ENCODE measurements at regions of chr11 and their contacts with region 1.

Region 1: GRCh38 chr11:19679952-19680828 is 32.4 kb upstream of the NAV2 start:
- DNase-seq: peak; percentile 72 to 76
- ATAC-seq: peak; percentile 64 to 75
- H3K4me3 ChIP-seq: no peak overlapping the region
- H3K27ac ChIP-seq: peak overlapping the region; percentile 56 to 76 (median 73)
- H3K4me1 ChIP-seq: peaks cover 23 to 50% of the 10 kb centered on the region in 2 donors
- H3K27me3 ChIP-seq: no peaks in the 10 kb centered on the region
- CTCF ChIP-seq: no peak
- POLR2A ChIP-seq: no peak

Region 2: GRCh38 chr11:18972336-18972735 is 707.9 kb before region 1 on chr11:
- in situ Hi-C with region 1: no loop called
- intact Hi-C with region 1: no loop called
- DNase-seq: no peak
- ATAC-seq: no peak
- H3K4me3 ChIP-seq: no peak overlapping the region
- H3K27ac ChIP-seq: no peak overlapping the region
- H3K4me1 ChIP-seq: no peaks in the 10 kb centered on the region
- H3K27me3 ChIP-seq: no peaks in the 10 kb centered on the region
- CTCF ChIP-seq: no peak
- POLR2A ChIP-seq: no peak

Region 3: GRCh38 chr11:19526119-19526518 is 154.1 kb before region 1 on chr11:
- in situ Hi-C with region 1: no loop called
- intact Hi-C with region 1: no loop called
- DNase-seq: no peak
- ATAC-seq: no peak
- H3K4me3 ChIP-seq: no peak overlapping the region
- H3K27ac ChIP-seq: no peak overlapping the region
- H3K4me1 ChIP-seq: no peaks in the 10 kb centered on the region
- H3K27me3 ChIP-seq: no peaks in the 10 kb centered on the region
- CTCF ChIP-seq: no peak
- POLR2A ChIP-seq: no peak

Region 4: DNA sequence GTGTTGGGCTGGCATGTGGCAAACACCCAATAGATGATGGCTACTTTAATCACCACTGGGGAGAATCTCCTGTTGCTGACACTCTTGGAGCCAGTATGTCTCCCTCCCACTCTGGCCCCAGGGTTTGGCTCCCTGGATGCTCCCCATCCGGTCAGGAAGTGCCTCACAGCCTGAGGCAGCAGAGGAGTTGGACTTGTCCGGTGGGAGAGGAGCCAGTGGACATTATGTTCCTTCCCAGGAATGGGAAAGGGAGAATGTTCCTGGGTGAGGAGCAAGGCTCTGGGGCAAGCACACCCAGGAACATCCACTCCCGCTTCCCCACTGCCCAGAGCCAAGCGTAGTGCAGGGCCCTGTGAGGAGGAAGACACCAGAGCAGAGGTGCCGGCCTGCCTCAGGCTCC is 52.2 kb before region 1 on chr11:
- in situ Hi-C with region 1: no loop called
- intact Hi-C with region 1: loop called (anchors 2 kb)
- DNase-seq: peak; percentile 84 to 86
- ATAC-seq: peak; percentile 95 to 97
- H3K4me3 ChIP-seq: no peak overlapping the region
- H3K27ac ChIP-seq: peak overlapping the region; percentile 62 to 76 (median 70)
- H3K4me1 ChIP-seq: peaks cover 9 to 22% of the 10 kb centered on the region in 2 donors
- H3K27me3 ChIP-seq: no peaks in the 10 kb centered on the region
- CTCF ChIP-seq: no peak
- POLR2A ChIP-seq: peak in 1 of 2 donors; percentile 18

Region 5: DNA sequence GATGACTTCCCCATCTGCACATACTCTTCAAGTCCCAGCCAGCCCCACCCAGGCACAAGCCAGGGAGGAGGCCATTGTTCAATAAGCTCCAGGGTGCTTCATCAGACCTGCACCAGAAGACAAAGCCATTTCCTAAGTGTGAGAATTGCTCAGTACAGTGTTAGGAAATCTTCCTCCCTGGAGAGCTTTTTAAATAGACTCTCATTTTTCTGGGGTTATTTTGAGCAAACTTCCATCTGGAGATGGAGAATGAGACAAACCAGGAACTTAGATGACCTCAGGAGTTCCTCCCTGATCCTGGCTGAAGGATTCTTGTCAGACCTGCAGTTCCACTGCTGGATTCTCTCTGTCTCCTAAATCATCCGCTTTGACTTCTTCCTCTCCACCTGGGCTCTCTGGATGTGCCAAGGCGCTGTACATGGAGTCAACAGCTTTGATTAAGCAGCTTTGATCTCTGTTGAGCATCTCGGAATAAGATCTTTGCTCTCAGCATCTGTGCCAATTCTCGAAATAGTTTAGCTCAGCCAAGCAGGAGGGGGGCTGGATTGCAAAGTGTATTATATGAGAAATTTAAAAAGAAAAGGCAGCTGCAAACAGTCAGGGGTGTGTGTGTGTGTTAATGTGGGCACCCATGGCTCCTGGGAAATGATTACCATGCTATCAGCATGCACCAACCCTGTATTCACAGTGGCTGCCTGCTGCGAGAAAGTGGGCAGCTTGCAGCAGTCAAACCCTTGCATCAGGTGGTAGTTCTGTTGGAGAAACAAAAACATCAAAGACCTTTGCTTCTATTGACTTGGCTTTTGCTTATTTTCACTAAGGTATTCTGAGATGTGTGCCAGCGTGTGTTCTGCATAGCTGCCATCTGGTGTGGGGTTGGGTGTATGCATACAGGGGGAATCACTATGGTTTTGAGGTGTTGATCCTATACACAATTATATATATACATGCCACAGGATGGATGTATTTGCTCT is 37.7 kb before region 1 on chr11:
- in situ Hi-C with region 1: no loop called
- intact Hi-C with region 1: loop called (anchors 1 kb)
- DNase-seq: peak in 1 of 2 donors; percentile 51
- ATAC-seq: peak; percentile 83 to 86
- H3K4me3 ChIP-seq: no peak overlapping the region
- H3K27ac ChIP-seq: peak overlapping the region in 1 of 4 donors; percentile 5
- H3K4me1 ChIP-seq: peaks cover 0 to 9% of the 10 kb centered on the region in 2 donors
- H3K27me3 ChIP-seq: no peaks in the 10 kb centered on the region
- CTCF ChIP-seq: no peak
- POLR2A ChIP-seq: no peak

Region 6: GRCh38 chr11:19712281-19713220 is 32.4 kb after region 1 on chr11 and contains the start of gene NAV2:
- in situ Hi-C with region 1: no loop called
- intact Hi-C with region 1: loop called (anchors 5 kb)
- DNase-seq: peak; percentile 88 to 92
- ATAC-seq: peak; percentile 91 to 92
- H3K4me3 ChIP-seq: peak within 1 kb of the TSS; percentile 64 to 92 (median 76)
- H3K27ac ChIP-seq: peak within 1 kb of the TSS; percentile 83 to 92 (median 90)
- H3K4me1 ChIP-seq: peaks cover 12 to 25% of the 10 kb centered on the region in 2 donors
- H3K27me3 ChIP-seq: peaks cover 19 to 28% (median 22%) of the 10 kb centered on the region in 3 donors
- CTCF ChIP-seq: peak in 2 of 5 experiments; percentile 20 to 32
- POLR2A ChIP-seq: peak; percentile 92 to 98
- total RNA-seq, gene NAV2: 3.2 to 7.7 (median 5.5) TPM

Region 7: DNA sequence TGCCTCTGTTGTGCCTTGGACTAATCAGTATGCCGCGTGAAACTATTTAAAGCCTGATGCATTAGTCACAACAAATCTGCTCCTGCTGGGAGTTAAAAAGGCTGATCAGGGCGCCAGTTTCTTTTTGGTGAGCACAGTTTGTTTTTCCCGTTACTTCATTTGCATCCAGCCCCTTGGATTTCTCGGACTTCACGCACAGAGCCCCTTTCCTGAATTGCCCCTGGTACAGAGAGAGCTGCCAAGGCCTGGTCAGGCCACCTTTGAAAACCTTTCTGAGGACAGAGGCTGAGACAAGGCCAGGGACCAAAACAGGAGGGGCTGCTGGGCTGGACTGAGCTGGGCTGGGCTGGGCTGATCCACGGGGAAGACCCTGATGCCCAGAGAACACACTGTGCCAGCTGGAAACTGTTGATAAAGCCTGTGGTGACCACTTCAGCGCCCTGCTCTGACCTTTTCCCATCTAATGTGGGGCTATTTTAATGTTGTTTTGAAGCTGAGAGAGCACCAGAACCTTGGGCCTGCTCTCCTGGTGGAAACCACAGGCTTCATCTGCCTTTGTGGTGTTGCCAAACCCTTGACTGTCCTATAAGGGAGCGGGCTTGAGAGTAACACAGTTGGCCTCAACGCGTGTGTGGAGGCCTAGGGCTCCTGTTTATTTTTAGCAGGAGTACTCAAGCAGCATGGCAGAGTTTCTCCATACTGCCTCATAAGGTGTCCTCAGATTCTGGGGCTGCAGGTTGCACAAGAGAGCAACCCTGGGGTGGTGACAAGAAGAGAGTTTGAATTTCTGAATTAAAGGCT is 76.7 kb after region 1 on chr11:
- in situ Hi-C with region 1: no loop called
- intact Hi-C with region 1: no loop called
- DNase-seq: peak in 1 of 2 donors; percentile 54
- ATAC-seq: peak; percentile 81 to 87
- H3K4me3 ChIP-seq: no peak overlapping the region
- H3K27ac ChIP-seq: peak overlapping the region; percentile 1 to 40 (median 28)
- H3K4me1 ChIP-seq: peaks cover 0 to 5% of the 10 kb centered on the region in 2 donors
- H3K27me3 ChIP-seq: no peaks in the 10 kb centered on the region
- CTCF ChIP-seq: no peak
- POLR2A ChIP-seq: no peak

Region 8: GRCh38 chr11:20909995-20910726 is 1230.0 kb after region 1 on chr11:
- in situ Hi-C with region 1: no loop called
- intact Hi-C with region 1: no loop called
- DNase-seq: no peak
- ATAC-seq: no peak
- H3K4me3 ChIP-seq: no peak overlapping the region
- H3K27ac ChIP-seq: no peak overlapping the region
- H3K4me1 ChIP-seq: no peaks in the 10 kb centered on the region
- H3K27me3 ChIP-seq: no peaks in the 10 kb centered on the region
- CTCF ChIP-seq: no peak
- POLR2A ChIP-seq: no peak